ENCODE measurements at regions of chr4 and their contacts with region 1.

Region 1: GRCh38 chr4:77104791-77105540 is 29.2 kb upstream of the CCNI start:
- DNase-seq: no peak
- ATAC-seq: no peak
- H3K4me3 ChIP-seq: no peak overlapping the region
- H3K27ac ChIP-seq: no peak overlapping the region
- H3K4me1 ChIP-seq: no peaks in the 10 kb centered on the region
- H3K27me3 ChIP-seq: peaks cover 2% of the 10 kb centered on the region
- CTCF ChIP-seq: no peak
- POLR2A ChIP-seq: no peak
- RAD21 ChIP-seq: no peak

Region 2: GRCh38 chr4:76811604-76812412 is 293.2 kb before region 1 on chr4:
- CTCF ChIA-PET with region 1: no interaction called
- POLR2A ChIA-PET with region 1: no interaction called
- dilution Hi-C with region 1: no loop called
- in situ Hi-C with region 1: no loop called
- intact Hi-C with region 1: no loop called
- DNase-seq: peak; percentile 69
- ATAC-seq: peak; percentile 68
- H3K4me3 ChIP-seq: no peak overlapping the region
- H3K27ac ChIP-seq: peak overlapping the region; percentile 31
- H3K4me1 ChIP-seq: peaks cover 8% of the 10 kb centered on the region
- H3K27me3 ChIP-seq: no peaks in the 10 kb centered on the region
- CTCF ChIP-seq: no peak
- POLR2A ChIP-seq: no peak
- RAD21 ChIP-seq: no peak

Region 3: DNA sequence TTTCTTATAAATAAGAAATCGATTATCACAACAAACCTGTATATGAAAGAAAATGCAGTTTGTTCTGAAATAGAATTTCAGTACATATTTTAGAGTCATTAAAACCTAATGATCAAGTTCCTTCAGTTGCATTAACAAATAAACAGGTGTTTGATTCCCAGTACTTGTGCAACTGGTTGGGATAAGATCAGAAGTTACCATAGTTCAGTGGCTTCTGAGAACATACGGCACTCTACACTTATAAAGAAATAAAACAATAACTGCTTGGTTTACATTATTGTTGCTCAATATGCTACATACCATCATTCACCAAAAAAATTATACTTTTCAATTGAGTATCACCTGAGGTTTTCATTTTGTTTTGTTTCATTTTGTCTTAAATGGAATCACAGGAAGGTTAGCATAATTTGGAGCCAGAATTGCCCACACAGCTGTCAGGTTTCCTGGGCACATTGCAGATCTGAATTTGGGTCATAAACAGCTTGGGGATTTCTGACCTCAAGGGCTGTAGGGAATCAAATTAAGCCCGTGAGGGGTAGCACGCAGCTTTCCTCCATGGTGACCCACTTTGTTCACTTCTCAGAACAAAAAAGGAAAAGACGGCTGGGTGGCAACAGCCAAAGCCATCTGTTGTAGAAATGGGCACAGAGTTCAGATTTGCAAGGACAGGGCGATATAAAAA is 37.1 kb after region 1 on chr4:
- CTCF ChIA-PET with region 1: no interaction called
- POLR2A ChIA-PET with region 1: no interaction called
- dilution Hi-C with region 1: no loop called
- in situ Hi-C with region 1: no loop called
- intact Hi-C with region 1: loop called (anchors 5 kb)
- DNase-seq: no peak
- ATAC-seq: no peak
- H3K4me3 ChIP-seq: no peak overlapping the region
- H3K27ac ChIP-seq: no peak overlapping the region
- H3K4me1 ChIP-seq: no peaks in the 10 kb centered on the region
- H3K27me3 ChIP-seq: peaks cover 15% of the 10 kb centered on the region
- CTCF ChIP-seq: no peak
- POLR2A ChIP-seq: no peak
- RAD21 ChIP-seq: no peak

Measured in IMR-90 (cell line).